PC-9 (cell line): ENCODE measurements at regions of chr2 and their contacts with region 1.

Region 1: GRCh38 chr2:127293748-127294562 is at the start of gene ERCC3:
- DNase-seq: peak; percentile 72 to 79
- H3K4me3 ChIP-seq: peak within 1 kb of the TSS; percentile 72
- H3K27ac ChIP-seq: peak within 1 kb of the TSS; percentile 68
- H3K4me1 ChIP-seq: peaks cover 16% of the 10 kb centered on the region
- H3K27me3 ChIP-seq: no peaks in the 10 kb centered on the region
- CTCF ChIP-seq: 0 out of 2 replicates have a peak, but pooled peaks have one; percentile 34
- total RNA-seq, gene ERCC3: 70.3 and 73.2 TPM in 2 replicates

Region 2: GRCh38 chr2:126699716-126700581 is 594.0 kb before region 1 on chr2:
- CTCF ChIA-PET with region 1: no interaction called
- POLR2A ChIA-PET with region 1: no interaction called
- intact Hi-C with region 1: no loop called
- DNase-seq: no peak
- H3K4me3 ChIP-seq: no peak overlapping the region
- H3K27ac ChIP-seq: no peak overlapping the region
- H3K4me1 ChIP-seq: no peaks in the 10 kb centered on the region
- H3K27me3 ChIP-seq: peaks cover 41% of the 10 kb centered on the region
- CTCF ChIP-seq: no peak

Region 3: GRCh38 chr2:127041259-127041970 is 252.5 kb before region 1 on chr2:
- CTCF ChIA-PET with region 1: interaction called, 10 read pairs
- POLR2A ChIA-PET with region 1: no interaction called
- intact Hi-C with region 1: no loop called
- DNase-seq: no peak
- H3K4me3 ChIP-seq: no peak overlapping the region
- H3K27ac ChIP-seq: no peak overlapping the region
- H3K4me1 ChIP-seq: no peaks in the 10 kb centered on the region
- H3K27me3 ChIP-seq: no peaks in the 10 kb centered on the region
- CTCF ChIP-seq: no peak

Region 4: DNA sequence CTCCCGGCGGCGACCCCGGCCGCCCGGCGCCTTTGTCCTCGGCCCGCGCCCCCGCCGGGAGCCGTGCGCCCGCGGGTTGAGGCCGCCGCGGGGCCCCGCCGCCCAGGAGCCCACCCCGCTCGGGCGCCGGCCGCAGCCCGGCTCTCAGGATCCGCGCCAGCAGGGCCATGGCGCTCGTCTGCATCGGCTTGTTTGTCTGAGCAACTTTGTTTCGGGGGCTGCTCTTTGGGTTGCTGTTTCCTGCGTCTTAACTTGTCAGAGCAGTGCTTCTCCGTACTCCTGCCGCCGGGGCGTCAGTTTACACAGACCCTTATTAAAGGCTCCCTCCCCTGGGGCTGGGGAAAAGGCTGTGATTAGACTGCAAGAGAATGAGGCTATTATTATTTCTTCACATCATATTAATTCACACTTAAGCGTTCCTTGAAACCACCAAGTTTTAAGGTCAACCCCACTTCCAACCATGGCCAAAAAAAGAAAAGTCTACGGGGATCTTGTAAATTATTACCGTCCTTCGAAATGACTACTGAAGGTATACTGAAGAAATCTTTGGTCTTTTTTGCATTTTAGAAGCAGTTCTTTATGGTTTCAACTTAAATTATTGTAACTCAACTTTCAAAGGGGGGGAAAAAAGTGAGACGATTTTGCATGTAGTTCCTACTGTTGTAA is 73.7 kb before region 1 on chr2 and contains the start of gene CYP27C1:
- CTCF ChIA-PET with region 1: interaction called, 3 read pairs
- POLR2A ChIA-PET with region 1: interaction called, 10 read pairs
- intact Hi-C with region 1: loop called (anchors 5 kb)
- DNase-seq: peak; percentile 31 to 36
- H3K4me3 ChIP-seq: peak within 1 kb of the TSS; percentile 79
- H3K27ac ChIP-seq: peak within 1 kb of the TSS; percentile 97
- H3K4me1 ChIP-seq: peaks cover 54% of the 10 kb centered on the region
- H3K27me3 ChIP-seq: no peaks in the 10 kb centered on the region
- CTCF ChIP-seq: no peak
- total RNA-seq, gene CYP27C1: 0.94 and 1.6 TPM in 2 replicates

Region 5: GRCh38 chr2:127379712-127380355 is 85.9 kb after region 1 on chr2:
- CTCF ChIA-PET with region 1: interaction called, 10 read pairs
- POLR2A ChIA-PET with region 1: no interaction called
- intact Hi-C with region 1: no loop called
- DNase-seq: no peak
- H3K4me3 ChIP-seq: no peak overlapping the region
- H3K27ac ChIP-seq: no peak overlapping the region
- H3K4me1 ChIP-seq: peaks cover 21% of the 10 kb centered on the region
- H3K27me3 ChIP-seq: no peaks in the 10 kb centered on the region
- CTCF ChIP-seq: no peak

Region 6: DNA sequence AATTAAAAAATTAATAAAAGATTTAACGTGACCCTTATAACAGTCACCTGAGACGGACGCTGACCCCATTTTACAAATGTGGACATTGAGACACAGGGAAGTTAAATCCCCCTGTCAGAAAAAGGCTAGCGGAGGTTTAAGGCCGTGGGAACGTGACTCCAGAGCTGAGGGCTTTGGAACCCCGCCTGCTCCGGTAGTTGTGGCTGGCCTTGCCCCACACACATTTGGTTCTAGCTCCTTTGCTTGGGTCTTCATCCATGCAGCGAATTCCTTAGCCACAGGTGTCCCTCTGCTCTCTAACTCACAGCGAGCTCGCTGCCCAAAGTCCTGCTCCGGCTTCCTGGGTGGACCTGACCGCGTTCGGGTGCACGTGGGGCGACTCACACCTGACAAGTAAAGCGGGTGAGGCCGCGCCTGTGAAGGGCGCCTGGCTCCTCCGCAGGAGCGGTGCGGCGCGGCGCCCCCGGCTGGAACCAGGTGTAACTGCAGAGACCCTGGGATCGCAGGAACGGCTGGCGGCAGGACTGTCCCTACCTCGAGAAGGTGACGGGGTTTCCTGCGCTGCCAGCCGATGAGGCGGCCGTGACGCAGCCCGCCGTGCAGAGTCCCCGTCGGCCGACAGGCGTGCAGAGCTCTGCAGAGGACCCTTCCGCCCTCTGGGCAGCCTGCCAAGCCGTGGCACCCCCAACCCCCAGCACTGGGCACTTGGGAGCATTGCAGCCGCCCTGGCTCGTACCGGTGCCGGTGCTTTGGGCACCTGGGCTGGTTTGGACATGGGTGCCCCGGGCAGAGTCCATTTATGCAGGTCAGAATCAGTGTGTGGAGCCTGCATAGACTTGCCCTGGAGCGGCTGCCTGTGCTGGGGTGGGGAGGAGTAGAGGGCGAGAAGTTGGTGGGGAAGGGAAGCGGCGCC is 121.9 kb after region 1 on chr2:
- CTCF ChIA-PET with region 1: no interaction called
- POLR2A ChIA-PET with region 1: no interaction called
- intact Hi-C with region 1: no loop called
- DNase-seq: peak; percentile 74 to 87
- H3K4me3 ChIP-seq: peak overlapping the region; percentile 50
- H3K27ac ChIP-seq: no peak overlapping the region
- H3K4me1 ChIP-seq: peaks cover 61% of the 10 kb centered on the region
- H3K27me3 ChIP-seq: no peaks in the 10 kb centered on the region
- CTCF ChIP-seq: peak; percentile 81

Region 7: GRCh38 chr2:127498386-127498785 is 204.4 kb after region 1 on chr2:
- CTCF ChIA-PET with region 1: no interaction called
- POLR2A ChIA-PET with region 1: no interaction called
- intact Hi-C with region 1: no loop called
- DNase-seq: peak in 1 of 2 experiments; percentile 88
- H3K4me3 ChIP-seq: no peak overlapping the region
- H3K27ac ChIP-seq: peak overlapping the region; percentile 8
- H3K4me1 ChIP-seq: peaks cover 22% of the 10 kb centered on the region
- H3K27me3 ChIP-seq: no peaks in the 10 kb centered on the region
- CTCF ChIP-seq: no peak

Region 8: GRCh38 chr2:127743477-127744026 is 449.6 kb after region 1 on chr2:
- CTCF ChIA-PET with region 1: no interaction called
- POLR2A ChIA-PET with region 1: no interaction called
- intact Hi-C with region 1: no loop called
- DNase-seq: no peak
- H3K4me3 ChIP-seq: no peak overlapping the region
- H3K27ac ChIP-seq: no peak overlapping the region
- H3K4me1 ChIP-seq: no peaks in the 10 kb centered on the region
- H3K27me3 ChIP-seq: no peaks in the 10 kb centered on the region
- CTCF ChIP-seq: no peak

Region 9: DNA sequence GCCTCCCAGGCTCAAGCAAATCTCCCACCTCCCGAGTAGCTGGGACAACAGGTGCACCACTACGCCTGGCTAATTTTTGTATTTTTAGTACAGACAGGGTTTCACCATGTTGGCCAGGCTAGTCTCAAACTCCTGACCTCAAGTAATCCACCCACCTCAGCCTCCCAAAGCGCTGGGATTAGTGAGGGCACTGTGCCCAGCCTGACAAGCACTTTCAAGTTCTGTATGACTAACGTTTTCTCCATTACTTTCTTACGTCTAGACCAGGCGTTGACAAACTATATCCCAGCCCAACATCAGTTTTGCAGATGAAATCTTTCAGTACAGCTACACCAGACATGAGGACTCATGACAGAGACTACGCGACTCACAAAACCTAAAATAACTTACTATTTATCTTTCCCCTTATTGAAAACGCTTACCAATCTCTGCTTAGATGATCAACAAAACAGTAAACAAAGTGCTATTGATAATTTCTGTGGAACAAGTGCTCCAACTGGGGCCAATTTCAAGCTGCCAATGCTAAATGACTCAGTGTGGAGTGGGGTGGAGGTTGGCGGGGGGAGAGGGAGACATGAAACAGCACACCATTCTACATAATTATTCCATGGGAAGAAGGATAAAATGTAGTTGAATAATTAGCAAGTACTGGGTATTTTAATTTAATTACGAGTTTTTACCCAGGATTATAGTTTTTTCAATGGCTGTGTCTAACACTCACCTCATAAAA is 674.8 kb after region 1 on chr2:
- CTCF ChIA-PET with region 1: no interaction called
- POLR2A ChIA-PET with region 1: interaction called, 23 read pairs
- intact Hi-C with region 1: no loop called
- DNase-seq: no peak
- H3K4me3 ChIP-seq: no peak overlapping the region
- H3K27ac ChIP-seq: no peak overlapping the region
- H3K4me1 ChIP-seq: no peaks in the 10 kb centered on the region
- H3K27me3 ChIP-seq: no peaks in the 10 kb centered on the region
- CTCF ChIP-seq: no peak